Right ventricle myocardium inferior (tissue), 1 donor: ENCODE measurements at regions of chr12 and their contacts with region 1.

Region 1: DNA sequence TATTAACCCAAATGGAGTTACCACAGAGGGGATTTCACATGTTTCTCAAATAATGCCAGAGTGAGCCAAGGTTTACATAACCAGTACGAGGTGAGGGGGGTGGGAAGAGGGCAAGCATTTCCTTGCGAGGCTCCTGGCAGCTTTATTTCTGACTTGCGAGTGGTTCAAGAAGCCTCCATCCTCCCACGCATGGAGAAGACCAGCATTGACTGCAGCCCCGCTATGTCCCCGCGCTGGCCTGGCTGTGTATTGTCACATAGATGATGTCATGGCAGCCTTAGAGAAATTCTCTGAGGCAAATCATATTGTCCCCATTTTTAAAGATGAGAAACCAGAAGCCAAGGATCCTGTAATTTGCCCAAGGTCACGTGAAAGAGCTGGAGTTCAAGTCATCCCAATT is 188.2 kb downstream of the CACNA1C start:
- DNase-seq: no peak
- ATAC-seq: no peak

Region 2: DNA sequence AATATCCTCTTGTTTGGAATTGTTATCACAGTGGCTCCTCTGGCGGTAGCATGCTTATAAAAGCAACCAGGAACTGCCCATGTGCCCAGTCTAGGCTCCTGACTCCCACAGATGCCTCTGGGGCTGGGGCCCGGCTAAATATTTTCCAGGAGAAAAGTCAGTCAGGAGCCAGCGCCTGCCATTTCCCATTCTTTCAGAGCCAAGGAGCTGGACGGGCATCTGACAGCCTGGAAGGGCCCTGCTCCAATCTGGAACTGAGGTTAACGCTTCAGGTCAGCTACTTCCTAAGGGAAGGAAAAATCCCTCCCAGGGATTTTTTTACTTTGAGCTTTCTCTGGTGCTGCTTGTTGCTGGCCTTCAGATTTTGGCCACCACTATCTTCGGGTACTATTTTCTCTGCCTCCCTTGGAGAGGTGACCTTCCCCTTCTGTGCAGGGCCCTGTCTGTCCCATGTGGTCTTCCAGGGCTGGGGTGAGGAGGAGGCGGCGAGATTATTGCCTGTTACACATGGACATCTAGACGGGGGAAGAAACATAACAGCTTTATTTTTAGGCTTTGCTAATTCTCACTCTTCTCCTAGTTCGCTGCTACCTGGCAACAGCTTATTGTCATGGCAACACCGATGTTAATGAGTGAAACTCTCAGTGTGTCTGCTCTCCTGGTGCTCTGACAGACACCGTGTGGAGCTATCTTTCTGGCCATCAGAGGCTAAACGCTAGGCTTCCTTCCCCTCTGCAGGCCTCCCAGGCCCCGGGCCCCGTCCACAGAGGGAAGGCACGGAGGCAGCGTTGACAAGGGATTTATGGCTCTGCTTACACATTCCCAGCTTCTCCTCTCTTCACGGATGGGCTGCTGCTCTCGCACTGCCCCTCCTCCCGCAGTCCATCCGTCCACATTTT is 27.8 kb before region 1 on chr12:
- intact Hi-C with region 1: loop called (anchors 1 kb)
- DNase-seq: no peak
- ATAC-seq: peak; percentile 37

Region 3: GRCh38 chr12:3333583-3333982 is 1092.6 kb after region 1 on chr12:
- intact Hi-C with region 1: no loop called
- DNase-seq: no peak
- ATAC-seq: peak; percentile 34